Activated naive CD4-positive, alpha-beta T cell treated with anti-CD3 and anti-CD28 coated beads for 36 hours (primary cell): ENCODE measurements at regions of chr19 and their contacts with region 1.

Region 1: GRCh38 chr19:2610637-2611482 is 91.6 kb downstream of the GNG7 start:
- DNase-seq: peak; percentile 95
- H3K4me3 Mint-ChIP-seq: peak overlapping the region; percentile 81
- H3K27ac Mint-ChIP-seq: peak overlapping the region; percentile 81
- H3K4me1 Mint-ChIP-seq: peaks cover 46% of the 10 kb centered on the region
- H3K27me3 Mint-ChIP-seq: peaks cover 4% of the 10 kb centered on the region

Region 2: GRCh38 chr19:2391118-2391725 is 219.6 kb before region 1 on chr19:
- CTCF ChIA-PET with region 1: interaction called, 17 read pairs
- intact Hi-C with region 1: loop called (anchors 2 kb)
- DNase-seq: peak; percentile 56
- H3K4me3 Mint-ChIP-seq: no peak overlapping the region
- H3K27ac Mint-ChIP-seq: no peak overlapping the region
- H3K4me1 Mint-ChIP-seq: peaks cover 15% of the 10 kb centered on the region
- H3K27me3 Mint-ChIP-seq: no peaks in the 10 kb centered on the region

Region 3: DNA sequence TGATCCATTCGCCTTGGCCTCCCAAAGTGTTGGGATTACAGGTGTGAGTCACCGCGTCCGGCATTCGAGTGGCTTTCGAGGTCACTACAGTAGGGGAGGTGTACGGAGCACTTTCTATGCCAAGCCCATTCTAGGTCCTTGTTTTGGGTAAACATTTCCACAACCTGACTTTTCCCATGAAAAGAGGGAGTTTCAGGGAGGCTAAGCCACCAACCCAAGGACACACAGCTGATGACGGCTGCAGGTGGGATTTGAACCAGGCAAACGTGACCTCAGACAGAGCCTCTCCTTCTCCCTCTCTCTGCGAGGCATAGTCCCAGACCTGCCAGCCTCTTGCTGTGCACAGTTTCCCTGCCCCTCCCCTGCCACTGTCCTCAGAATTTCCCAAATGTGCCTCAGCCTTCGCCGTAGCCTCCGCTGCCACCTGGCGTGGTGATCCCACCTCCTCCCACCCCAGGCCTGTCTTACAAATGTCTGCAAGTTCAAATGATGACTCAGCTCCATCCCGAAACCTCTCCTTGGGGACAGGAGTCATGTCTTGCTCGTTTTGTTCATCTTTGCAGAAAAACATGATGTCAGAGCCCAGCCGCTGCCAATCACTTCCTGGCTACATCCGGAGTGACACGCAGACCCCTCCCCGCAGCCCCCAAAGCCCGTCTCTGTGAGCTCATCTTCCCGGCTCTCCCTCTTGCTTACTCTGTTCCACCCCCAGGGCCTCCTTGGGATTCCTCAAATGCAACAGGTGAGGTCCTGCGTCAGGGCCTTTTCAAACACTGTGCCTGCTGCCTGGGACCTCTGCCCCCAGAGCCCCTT is 141.6 kb before region 1 on chr19:
- CTCF ChIA-PET with region 1: interaction called, 28 read pairs
- intact Hi-C with region 1: loop called (anchors 1 kb)
- DNase-seq: peak; percentile 83
- H3K4me3 Mint-ChIP-seq: no peak overlapping the region
- H3K27ac Mint-ChIP-seq: peak overlapping the region; percentile 61
- H3K4me1 Mint-ChIP-seq: peaks cover 11% of the 10 kb centered on the region
- H3K27me3 Mint-ChIP-seq: no peaks in the 10 kb centered on the region

Region 4: DNA sequence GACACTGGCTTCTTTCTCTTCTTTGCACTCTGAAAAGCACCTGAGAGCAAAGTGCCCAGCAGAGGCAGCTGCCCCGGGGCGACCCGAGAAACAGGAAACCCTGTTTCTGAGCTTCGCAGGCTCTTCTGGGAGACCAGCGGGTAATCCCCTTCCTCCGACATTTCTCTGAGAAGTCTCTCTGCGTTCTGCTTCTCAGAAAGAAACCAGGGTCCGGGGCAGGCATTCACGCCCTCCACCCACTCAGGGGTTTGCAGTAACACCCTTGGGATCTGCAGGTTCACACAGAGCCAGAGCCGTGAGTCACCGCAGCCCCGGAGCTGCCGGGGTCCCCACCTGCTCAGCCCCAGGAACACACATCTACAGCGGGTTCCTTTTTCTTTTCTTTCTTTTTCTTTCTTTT is 49.0 kb before region 1 on chr19:
- CTCF ChIA-PET with region 1: interaction called, 4 read pairs
- intact Hi-C with region 1: loop called (anchors 5 kb)
- DNase-seq: peak; percentile 89
- H3K4me3 Mint-ChIP-seq: peak overlapping the region; percentile 74
- H3K27ac Mint-ChIP-seq: peak overlapping the region; percentile 91
- H3K4me1 Mint-ChIP-seq: peaks cover 26% of the 10 kb centered on the region
- H3K27me3 Mint-ChIP-seq: no peaks in the 10 kb centered on the region

Region 5: GRCh38 chr19:2627319-2627829 is 16.5 kb after region 1 on chr19:
- CTCF ChIA-PET with region 1: interaction called, 64 read pairs
- intact Hi-C with region 1: no loop called
- DNase-seq: peak; percentile 78
- H3K4me3 Mint-ChIP-seq: no peak overlapping the region
- H3K27ac Mint-ChIP-seq: peak overlapping the region; percentile 70
- H3K4me1 Mint-ChIP-seq: peaks cover 48% of the 10 kb centered on the region
- H3K27me3 Mint-ChIP-seq: no peaks in the 10 kb centered on the region

Region 6: DNA sequence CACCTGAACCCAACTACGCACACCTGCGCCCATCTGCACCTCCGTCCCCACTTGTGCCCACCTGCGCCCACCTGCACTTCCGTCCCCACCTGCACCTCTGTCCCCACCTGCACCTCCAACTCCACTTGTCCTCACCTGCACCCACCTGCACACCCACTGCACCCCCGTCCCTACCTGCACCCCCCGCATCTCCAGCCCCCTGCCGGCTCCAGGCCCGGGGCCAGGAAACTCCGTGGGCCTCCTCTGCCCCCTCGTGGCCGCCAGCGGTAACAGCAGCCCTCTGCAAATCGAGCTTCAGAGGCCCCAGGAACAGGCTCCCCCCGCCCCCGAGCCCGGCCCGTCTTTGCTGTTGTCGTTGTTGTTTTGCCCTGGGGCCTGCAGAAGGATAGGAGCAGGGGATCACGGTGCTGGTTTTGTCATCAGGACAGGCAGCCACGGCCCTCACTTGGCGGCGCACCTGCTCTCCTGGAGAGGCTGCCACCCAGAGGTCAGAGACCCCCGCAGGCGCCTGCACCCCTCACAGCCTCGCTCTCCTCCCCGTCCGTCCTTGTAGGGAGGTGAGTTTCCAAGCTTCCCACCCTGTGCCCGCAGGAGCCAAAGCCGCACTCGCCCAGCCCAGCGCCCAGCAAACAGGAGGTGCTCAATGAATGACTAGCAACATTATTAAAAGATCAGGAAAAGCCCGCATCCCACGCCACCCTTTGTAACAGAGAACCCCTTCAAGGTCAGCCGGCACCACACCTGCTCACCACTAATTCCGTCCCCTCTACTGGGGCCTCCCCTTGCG is 26.2 kb after region 1 on chr19:
- CTCF ChIA-PET with region 1: interaction called, 92 read pairs
- intact Hi-C with region 1: loop called (anchors 1 kb)
- DNase-seq: peak; percentile 83
- H3K4me3 Mint-ChIP-seq: no peak overlapping the region
- H3K27ac Mint-ChIP-seq: no peak overlapping the region
- H3K4me1 Mint-ChIP-seq: peaks cover 13% of the 10 kb centered on the region
- H3K27me3 Mint-ChIP-seq: peaks cover 4% of the 10 kb centered on the region

Region 7: GRCh38 chr19:2668175-2668763 is 57.4 kb after region 1 on chr19:
- CTCF ChIA-PET with region 1: no interaction called
- intact Hi-C with region 1: no loop called
- DNase-seq: no peak
- H3K4me3 Mint-ChIP-seq: no peak overlapping the region
- H3K27ac Mint-ChIP-seq: no peak overlapping the region
- H3K4me1 Mint-ChIP-seq: no peaks in the 10 kb centered on the region
- H3K27me3 Mint-ChIP-seq: no peaks in the 10 kb centered on the region